Activated CD4-positive, alpha-beta T cell treated with anti-CD3 and anti-CD28 coated beads for 36 hours (primary cell): ENCODE measurements at regions of chr22 and their contacts with region 1.

Region 1: DNA sequence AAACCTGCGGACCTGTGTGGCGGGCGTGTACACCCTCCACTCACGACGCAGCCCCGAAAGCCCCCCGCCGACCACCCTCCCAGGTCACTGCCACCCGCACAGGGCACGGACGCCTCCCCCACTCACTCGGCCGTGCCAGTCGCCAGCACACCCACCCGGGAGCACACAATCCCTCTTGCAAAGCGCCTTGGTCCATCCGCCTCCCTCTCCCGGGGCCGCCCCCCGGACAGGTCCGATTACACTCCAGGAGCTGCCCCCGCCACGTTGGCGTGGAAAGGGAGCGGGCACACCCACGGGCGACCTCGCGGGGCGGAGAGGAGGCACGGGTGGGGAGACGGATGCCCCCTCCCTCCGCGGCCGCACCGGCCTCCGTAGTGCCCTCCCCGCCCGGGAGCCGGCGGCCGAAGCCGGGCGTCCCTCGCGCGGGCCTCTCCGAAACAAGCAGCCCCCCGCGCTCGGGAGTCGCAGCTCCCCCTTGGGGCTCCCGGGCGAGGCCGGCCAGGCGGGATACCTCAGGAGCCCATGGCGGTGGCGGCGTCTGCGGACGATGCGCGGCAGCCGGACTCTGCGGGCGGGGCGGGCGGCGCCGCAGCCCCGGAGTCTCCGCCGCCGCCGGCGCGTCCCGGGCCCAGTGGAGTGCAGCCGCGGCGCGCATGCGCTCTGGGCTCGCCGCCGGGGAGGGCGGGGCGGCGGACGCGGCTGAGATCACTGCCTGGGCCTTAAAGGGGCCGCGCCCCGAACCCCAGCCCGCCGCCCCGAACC is at the start of gene TMEM184B:
- DNase-seq: peak; percentile 88
- ATAC-seq: peak; percentile 96
- H3K4me3 Mint-ChIP-seq: peak within 1 kb of the TSS; percentile 81
- H3K27ac Mint-ChIP-seq: peak within 1 kb of the TSS; percentile 89
- H3K4me1 Mint-ChIP-seq: peaks cover 35% of the 10 kb centered on the region
- H3K27me3 Mint-ChIP-seq: no peaks in the 10 kb centered on the region
- total RNA-seq, gene TMEM184B: 16.0 to 19.8 TPM

Region 2: GRCh38 chr22:38056969-38057891 is 215.3 kb before region 1 on chr22 and contains the start of gene PICK1:
- CTCF ChIA-PET with region 1: no interaction called
- POLR2A ChIA-PET with region 1: no interaction called
- intact Hi-C with region 1: loop called in 1 of 2 experiments (anchors 1 kb)
- DNase-seq: peak; percentile 92
- ATAC-seq: peak; percentile 93
- H3K4me3 Mint-ChIP-seq: peak within 1 kb of the TSS; percentile 88
- H3K27ac Mint-ChIP-seq: peak within 1 kb of the TSS; percentile 98
- H3K4me1 Mint-ChIP-seq: peaks cover 15% of the 10 kb centered on the region
- H3K27me3 Mint-ChIP-seq: no peaks in the 10 kb centered on the region
- total RNA-seq, gene PICK1: 14.9 to 17.2 TPM

Region 3: GRCh38 chr22:38317122-38317994 is 44.8 kb after region 1 on chr22 and contains the start of gene CSNK1E:
- CTCF ChIA-PET with region 1: interaction called, 3 read pairs
- POLR2A ChIA-PET with region 1: no interaction called
- intact Hi-C with region 1: loop called (anchors 1 kb)
- DNase-seq: peak; percentile 84
- ATAC-seq: peak; percentile 63
- H3K4me3 Mint-ChIP-seq: peak within 1 kb of the TSS; percentile 90
- H3K27ac Mint-ChIP-seq: peak within 1 kb of the TSS; percentile 94
- H3K4me1 Mint-ChIP-seq: peaks cover 41% of the 10 kb centered on the region
- H3K27me3 Mint-ChIP-seq: no peaks in the 10 kb centered on the region
- total RNA-seq, gene CSNK1E: 117 to 145 TPM

Region 4: GRCh38 chr22:38398609-38399461 is 126.3 kb after region 1 on chr22:
- CTCF ChIA-PET with region 1: no interaction called
- POLR2A ChIA-PET with region 1: no interaction called
- intact Hi-C with region 1: loop called in 1 of 2 experiments (anchors 2 kb)
- DNase-seq: peak; percentile 92
- ATAC-seq: peak; percentile 67
- H3K4me3 Mint-ChIP-seq: peak overlapping the region; percentile 72
- H3K27ac Mint-ChIP-seq: peak overlapping the region; percentile 47
- H3K4me1 Mint-ChIP-seq: peaks cover 38% of the 10 kb centered on the region
- H3K27me3 Mint-ChIP-seq: no peaks in the 10 kb centered on the region

Region 5: DNA sequence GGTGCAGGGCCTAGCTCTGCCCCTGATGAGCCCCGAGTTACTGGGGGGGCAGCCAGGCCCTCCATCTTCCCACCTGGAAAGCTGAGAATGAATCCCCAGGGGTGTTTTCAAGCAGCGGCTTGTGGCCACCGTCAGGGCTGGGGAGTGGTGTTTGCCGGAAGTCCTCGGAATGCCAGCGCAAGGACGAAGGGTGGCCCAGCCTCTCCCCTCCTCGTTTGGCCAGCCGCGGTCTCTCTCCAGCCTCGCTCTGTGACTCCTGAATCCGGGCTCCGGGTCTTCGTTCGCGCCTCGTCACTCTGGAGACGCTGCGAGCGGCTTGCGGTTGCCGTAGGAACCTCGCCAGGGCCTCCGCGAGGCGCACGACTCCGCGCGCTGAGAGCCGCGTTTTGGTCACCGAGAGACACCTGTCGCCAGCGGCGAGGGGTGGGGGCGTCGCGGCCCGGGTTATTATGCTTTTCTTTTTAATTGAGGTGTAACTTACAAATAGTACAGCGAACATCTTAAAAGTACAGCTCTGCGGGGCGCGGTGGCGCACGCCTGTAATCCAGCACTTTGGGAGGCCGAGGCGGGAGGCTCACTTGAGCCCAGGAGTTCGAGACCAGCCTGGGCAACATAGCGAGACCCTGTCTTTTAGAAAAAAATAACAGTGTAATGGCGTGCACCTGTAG is 189.0 kb after region 1 on chr22:
- CTCF ChIA-PET with region 1: no interaction called
- POLR2A ChIA-PET with region 1: no interaction called
- intact Hi-C with region 1: loop called in 1 of 2 experiments (anchors 5 kb)
- DNase-seq: peak; percentile 88
- ATAC-seq: peak; percentile 84
- H3K4me3 Mint-ChIP-seq: no peak overlapping the region
- H3K27ac Mint-ChIP-seq: no peak overlapping the region
- H3K4me1 Mint-ChIP-seq: peaks cover 11% of the 10 kb centered on the region
- H3K27me3 Mint-ChIP-seq: peaks cover 72% of the 10 kb centered on the region

Region 6: GRCh38 chr22:38656256-38657044 is 383.9 kb after region 1 on chr22 and contains the starts of genes CBY1 and FAM227A:
- CTCF ChIA-PET with region 1: no interaction called
- POLR2A ChIA-PET with region 1: no interaction called
- intact Hi-C with region 1: loop called in 1 of 2 experiments (anchors 2 kb)
- DNase-seq: peak; percentile 89
- ATAC-seq: peak; percentile 83
- H3K4me3 Mint-ChIP-seq: peak within 1 kb of the TSS; percentile 79
- H3K27ac Mint-ChIP-seq: peak within 1 kb of the TSS; percentile 93
- H3K4me1 Mint-ChIP-seq: peaks cover 11% of the 10 kb centered on the region
- H3K27me3 Mint-ChIP-seq: no peaks in the 10 kb centered on the region
- total RNA-seq, gene CBY1: 9.8 to 11.6 TPM
- total RNA-seq, gene FAM227A: 0.30 to 0.63 TPM